Posterior cingulate gyrus (tissue), 11 donors: ENCODE measurements at regions of chr14 and their contacts with region 1.

Region 1: GRCh38 chr14:89973234-89973823 is 17.6 kb downstream of the TDP1 start:
- DNase-seq: peak; percentile 56 to 97 (median 82)

Region 2: DNA sequence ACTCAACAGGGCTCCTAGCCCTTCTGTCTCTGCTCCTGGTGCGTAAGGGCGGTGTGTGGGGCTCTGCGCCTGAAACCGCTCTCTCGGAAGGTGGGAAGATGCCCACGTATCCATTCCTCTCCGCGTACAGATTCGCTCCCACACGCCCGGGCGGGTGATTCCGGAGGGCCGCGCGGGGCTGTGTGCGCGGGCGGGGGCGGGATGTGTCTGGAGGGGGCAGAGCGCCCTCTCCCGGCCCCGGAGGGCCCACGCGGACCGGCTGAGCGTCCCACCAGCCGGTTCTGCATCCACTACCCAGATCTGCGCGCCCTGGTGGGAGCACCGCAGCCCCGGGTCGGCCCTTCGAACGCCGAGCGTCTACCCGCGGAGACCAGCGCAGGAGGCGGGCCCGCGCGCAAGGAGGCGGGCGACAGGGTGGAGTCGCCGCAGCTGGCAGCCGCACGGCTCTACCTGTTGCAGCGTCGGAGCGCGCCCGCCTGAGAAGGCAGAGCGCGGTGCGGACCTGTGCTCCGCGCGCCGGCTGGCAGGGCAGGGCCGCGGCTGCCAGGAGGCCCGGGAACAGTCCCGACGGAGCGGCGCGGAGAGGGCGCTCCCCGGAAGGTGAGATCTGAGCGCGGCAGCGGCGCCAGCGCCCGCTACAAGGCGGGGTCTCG is 87.1 kb after region 1 on chr14:
- intact Hi-C with region 1: loop called (anchors 1 kb)
- DNase-seq: peak; percentile 27 to 95 (median 64)

Region 3: GRCh38 chr14:90235179-90235976 is 262.0 kb after region 1 on chr14:
- intact Hi-C with region 1: loop called (anchors 1 kb)
- DNase-seq: peak; percentile 15 to 92 (median 66)